ENCODE measurements at regions of chr18 and their contacts with region 1.

Region 1: DNA sequence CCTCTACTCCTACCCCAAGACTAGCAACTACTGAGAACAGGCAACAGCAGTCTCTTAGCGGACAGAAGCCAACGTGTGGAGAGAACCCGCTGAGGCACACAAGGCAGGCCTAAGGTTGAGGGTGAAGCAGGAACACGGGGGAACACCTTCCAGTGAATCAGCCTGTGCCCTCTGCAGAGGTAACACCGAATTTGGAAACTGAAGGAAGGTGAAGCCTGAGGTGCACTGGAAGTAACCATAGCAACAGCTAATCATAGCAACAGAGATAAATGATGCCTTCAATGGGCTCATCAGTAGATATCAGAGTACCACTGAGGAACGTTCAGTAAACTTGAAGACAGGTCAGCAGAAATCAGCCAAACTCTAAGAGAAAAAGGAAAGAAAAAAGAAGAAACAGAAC is 43.3 kb downstream of the OSBPL1A start:
- DNase-seq: no peak
- H3K4me3 ChIP-seq: no peak overlapping the region
- H3K27ac ChIP-seq: no peak overlapping the region
- H3K4me1 ChIP-seq: peaks cover 0 to 5% of the 10 kb centered on the region in 2 donors
- H3K27me3 ChIP-seq: no peaks in the 10 kb centered on the region
- CTCF ChIP-seq: no peak
- POLR2A ChIP-seq: no peak

Region 2: GRCh38 chr18:24212939-24213338 is 141.3 kb before region 1 on chr18:
- intact Hi-C with region 1: no loop called
- DNase-seq: no peak
- H3K4me3 ChIP-seq: no peak overlapping the region
- H3K27ac ChIP-seq: no peak overlapping the region
- H3K4me1 ChIP-seq: peaks cover 15 to 22% of the 10 kb centered on the region in 2 donors
- H3K27me3 ChIP-seq: no peaks in the 10 kb centered on the region
- CTCF ChIP-seq: no peak
- POLR2A ChIP-seq: no peak

Region 3: DNA sequence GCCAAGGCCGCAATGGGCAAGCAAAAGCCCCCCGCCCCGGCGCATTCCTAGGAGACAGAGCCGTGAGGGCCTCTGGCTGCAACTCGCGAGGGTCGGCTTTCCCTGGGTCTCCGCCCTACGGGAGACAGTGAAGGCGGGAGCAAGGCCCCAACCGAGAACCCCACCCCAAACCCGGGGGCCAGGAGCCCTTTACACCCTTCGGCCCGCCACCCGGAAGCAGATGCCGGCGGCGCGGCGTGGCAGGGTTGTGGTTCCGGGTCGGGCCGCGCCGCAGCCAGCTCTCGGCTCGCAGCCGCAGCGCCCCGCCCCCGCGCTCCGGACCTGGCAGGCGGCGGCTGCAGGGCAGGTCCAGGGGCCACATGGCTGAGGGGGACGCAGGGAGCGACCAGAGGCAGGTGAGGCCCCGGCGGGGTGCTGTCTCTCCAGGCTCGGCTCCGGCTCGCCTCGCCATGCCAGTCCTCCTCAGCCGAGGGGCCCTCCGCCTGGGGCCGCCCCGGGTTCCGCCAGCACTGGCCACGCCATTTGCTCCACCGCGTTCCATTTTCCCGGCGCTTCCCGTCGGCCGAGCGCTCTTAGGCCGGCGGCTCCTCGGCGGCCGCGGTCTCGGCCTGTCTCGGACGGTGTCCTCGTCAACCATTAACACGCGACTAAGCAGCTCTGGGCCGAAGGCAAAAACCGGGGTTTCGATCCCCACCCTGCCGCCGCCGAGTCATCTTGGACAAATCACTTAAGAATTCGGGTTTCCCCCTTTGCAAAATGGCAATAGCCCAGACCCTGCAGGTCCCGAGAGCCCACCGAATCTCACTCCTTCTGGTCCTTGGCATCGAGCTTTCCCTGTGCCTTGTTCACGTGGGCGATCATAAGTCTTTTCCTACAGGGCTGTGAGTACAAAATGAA is 72.4 kb after region 1 on chr18 and contains the start of gene IMPACT:
- intact Hi-C with region 1: loop called (anchors 10 kb)
- DNase-seq: peak; percentile 84 to 86
- H3K4me3 ChIP-seq: peak within 1 kb of the TSS; percentile 59 to 90 (median 76)
- H3K27ac ChIP-seq: peak within 1 kb of the TSS; percentile 41 to 84 (median 73)
- H3K4me1 ChIP-seq: peaks cover 8 to 11% of the 10 kb centered on the region in 2 donors
- H3K27me3 ChIP-seq: no peaks in the 10 kb centered on the region
- CTCF ChIP-seq: no peak
- POLR2A ChIP-seq: peak in 1 of 2 donors; percentile 82
- total RNA-seq, gene IMPACT: 28.5 to 34.1 (median 32.6) TPM

Region 4: DNA sequence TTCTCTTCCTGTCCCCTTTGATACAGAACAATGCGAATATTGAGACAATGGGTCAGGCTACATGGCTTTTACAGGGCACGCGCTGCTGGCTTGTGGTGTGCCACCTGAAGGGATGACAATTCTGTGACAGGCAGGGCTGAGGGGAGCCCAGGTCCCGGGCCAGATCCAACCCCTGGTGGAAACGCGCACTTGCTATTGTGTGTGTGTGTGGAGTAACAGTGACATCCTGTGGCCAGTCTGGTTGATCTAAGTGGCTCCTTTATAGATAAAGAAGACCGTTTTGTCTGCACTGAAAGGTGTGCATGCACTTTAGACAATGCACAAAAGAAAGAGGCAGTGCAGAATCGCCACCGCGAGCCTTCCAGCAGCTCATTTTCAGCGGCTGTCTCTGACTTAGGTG is 379.8 kb after region 1 on chr18:
- intact Hi-C with region 1: loop called (anchors 10 kb)
- DNase-seq: no peak
- H3K4me3 ChIP-seq: no peak overlapping the region
- H3K27ac ChIP-seq: no peak overlapping the region
- H3K4me1 ChIP-seq: peaks cover 0 to 8% of the 10 kb centered on the region in 2 donors
- H3K27me3 ChIP-seq: no peaks in the 10 kb centered on the region
- CTCF ChIP-seq: no peak
- POLR2A ChIP-seq: no peak